Posterior vena cava (tissue), 2 donors: ENCODE measurements at regions of chr10 and their contacts with region 1.

Region 1: DNA sequence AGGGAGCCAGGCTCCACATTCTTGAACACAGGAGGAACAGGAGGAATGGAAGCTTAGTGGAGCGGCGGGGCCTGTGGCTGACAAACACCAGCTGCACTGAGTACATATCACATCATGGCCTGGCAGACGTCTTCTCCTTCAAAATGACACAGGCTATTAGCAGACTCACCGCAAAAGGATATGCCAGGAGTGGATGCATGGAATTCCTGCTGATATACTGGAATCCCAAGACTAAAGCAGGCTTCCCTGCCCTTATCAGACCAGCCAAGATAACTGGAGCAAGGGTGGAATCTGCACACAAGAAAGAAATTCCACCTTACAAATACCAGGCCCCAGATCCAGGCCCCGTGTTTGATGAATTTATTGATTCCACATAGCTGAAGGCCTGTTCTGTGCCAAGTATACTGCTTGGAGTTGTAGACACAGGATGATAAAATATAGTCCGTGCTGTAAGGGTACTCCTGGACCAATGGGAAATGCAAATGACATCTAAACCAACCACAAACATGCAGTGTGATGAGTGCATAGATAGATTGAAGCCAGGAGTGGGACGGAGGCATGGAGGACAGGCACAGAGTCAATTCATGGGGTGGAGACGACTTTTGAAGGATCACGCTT is 480.5 kb upstream of the ZMIZ1 start:
- DNase-seq: no peak

Region 2: GRCh38 chr10:78066012-78066411 is 522.3 kb before region 1 on chr10:
- intact Hi-C with region 1: no loop called
- DNase-seq: no peak

Region 3: GRCh38 chr10:78178940-78179339 is 409.4 kb before region 1 on chr10:
- intact Hi-C with region 1: loop called in 1 of 2 experiments (anchors 5 kb)
- DNase-seq: no peak

Region 4: GRCh38 chr10:78381107-78381506 is 207.2 kb before region 1 on chr10:
- intact Hi-C with region 1: no loop called
- DNase-seq: no peak

Region 5: DNA sequence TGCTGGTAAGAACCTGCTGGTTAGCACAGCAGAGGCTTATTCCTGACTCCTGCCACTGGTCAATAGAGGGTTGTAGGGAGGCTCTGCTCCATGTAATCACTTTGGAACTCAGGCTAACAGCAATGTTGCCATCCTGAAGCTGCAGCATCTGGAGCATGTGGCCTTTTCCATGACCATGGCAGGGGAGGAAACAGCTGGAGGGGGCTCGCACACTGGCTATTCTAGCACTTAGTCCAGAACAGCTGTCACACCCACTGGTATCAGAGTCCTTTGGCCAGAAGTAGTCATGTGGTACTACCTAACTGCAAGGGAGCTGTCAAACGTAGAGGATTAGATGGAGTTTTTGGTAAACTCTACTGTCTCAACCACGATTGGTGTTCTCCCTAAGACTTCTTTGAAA is 104.7 kb before region 1 on chr10:
- intact Hi-C with region 1: no loop called
- DNase-seq: no peak

Region 6: DNA sequence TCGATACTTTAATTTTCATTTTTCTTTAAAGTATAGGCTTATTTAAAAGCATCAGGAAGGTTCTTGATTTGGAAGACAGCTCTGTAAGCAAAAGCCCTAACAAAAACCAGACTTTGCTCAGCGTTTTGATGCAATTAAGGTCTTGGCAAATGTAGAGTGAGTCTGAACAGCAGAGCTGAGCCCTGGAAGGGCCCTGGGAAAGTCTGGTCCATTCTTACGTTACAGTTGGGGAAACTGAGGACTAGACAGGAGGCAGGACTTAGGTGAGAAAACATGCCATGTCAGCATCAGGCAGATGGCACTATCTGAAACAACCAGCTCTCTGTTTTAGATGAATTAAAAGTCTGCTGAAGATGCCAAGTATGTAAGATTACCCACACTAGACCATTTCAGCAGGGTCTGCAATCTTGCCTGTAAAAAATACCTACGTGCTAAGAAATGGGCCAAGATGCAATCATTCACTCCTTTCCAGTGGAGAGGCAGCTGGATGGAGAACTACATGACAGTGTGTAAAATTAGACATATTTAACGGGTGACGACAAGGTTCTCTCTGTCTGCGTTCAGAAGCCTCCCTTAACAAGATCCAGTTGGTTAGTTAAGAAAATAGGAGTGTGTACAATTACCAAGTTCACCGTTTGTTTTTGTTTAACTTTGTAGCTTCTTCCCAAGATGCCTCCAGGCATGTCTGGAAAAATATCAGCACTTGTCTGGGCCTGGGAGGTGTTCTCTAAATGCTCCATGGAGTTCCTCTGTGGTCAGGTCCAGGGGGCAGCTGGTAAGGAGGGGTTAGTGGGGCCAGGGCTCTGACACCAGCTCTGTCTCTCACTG is 21.8 kb before region 1 on chr10:
- intact Hi-C with region 1: loop called in 1 of 2 experiments (anchors 1 kb)
- DNase-seq: no peak

Region 7: DNA sequence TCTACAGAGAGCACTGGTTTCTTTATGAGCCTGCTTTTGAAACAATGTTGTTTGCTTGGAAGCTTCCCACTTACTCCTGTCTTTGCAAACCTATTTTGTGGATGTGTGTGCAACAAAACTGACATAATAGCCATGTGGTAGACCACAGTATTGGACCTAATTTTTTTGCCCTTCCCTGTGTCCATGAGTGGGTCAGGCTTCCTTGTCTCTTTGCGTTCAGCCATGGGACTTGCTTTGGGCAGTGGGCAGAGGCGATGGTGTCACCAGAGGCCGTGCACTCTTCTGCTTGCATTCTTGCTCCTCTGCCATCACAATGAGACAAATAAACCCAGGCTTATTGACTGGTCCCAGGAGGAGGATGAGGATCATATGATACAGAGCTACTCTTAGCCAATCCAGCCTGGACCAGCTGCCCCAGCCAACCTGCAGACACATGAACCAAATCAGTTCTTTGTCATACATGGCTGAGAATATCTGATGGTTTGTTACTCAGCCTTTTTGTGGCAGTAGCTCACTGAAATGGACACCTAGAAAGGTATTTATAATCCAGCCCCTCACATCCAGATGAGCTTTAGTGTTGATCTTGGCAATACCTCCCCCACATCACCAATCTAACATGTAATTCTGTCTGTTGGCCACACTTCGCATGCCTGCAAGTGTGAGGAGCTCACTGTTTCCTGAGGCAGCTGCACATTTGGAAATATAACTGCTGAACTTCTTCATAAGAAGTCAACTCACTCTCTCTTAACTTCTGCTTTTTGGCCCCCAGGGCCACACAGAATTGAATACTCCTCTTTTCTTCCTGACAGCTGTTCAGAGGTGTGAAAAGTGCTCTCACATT is 52.7 kb after region 1 on chr10:
- intact Hi-C with region 1: no loop called
- DNase-seq: no peak